GM18951 (cell line): ENCODE measurements at regions of chr21 and their contacts with region 1.

Region 1: DNA sequence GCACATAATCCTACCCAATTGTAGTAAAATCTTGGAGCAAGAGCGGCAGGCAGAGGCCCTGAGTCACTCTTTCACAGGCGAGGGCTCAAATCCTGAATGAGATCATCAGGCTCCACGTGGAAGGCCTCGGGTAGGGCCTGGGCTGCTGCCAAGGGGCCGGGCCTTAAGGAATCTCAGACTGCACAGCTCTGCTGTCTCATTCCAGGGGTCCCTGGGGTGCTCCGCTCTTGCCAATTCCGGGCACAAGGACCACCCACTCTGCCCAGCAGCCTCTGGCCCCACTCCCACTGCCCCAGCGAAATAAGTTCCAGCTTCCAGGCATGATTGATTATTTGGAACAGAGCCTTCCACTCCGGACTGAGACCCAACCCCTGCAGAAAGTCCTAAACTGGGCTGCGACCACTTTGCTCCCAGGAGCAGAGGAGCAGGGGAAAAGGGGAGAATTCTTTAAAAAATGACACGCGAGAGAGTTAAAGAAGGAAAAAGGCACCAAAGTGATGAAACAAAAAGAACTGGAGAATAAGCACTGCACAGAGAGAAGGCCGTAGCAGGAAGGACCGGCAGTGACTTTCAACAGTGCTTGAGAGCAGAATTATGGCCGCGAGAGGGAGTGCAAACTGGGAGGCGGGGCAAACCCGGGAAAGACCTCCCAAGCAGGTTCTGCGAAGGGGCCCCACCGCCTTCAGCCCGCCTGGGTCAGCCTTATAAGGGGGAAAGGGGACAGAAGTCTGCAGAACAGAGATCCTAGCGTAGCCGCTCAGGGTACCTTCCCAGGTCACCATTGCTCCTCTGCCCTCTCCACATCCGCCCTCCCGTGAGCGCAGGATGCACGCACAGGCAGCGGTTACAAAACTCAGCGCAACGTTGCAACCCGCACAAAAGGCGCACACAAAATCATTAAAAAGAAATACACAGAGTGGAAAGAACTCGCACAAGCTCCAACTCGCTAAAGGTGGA is 2.0 kb downstream of the ADAMTS1 start:
- POLR2A ChIP-seq: no peak

Region 2: DNA sequence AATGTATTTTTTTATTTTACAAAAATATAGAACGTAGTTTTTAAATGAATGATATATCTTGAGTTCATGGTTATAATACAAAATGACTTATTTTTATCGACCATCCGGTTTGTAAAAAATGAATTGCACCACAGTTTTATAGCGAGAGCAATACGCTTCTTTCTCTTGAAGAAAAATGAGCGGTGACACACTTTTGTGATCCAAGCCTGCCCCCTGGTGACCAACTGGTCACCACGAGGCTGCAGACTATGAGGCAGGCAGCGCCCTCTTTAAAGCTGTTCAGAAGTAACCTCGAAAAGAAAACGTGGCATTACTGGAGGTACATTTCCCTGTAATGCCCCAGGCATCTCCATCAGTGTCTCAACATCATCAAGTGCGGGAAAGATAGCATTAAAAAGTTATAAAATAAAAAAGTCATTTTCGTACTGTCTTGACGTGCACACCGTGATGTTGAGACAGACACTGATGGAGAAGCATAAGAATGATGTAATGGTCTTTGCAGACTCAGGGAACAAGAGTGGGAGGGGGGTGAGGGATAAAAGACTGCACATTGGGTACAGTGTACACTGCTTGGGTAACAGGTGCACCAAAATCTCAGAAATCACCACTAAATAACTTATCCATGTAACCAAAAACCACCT is 857.8 kb after region 1 on chr21:
- in situ Hi-C with region 1: loop called (anchors 25 kb)
- POLR2A ChIP-seq: no peak

Region 3: DNA sequence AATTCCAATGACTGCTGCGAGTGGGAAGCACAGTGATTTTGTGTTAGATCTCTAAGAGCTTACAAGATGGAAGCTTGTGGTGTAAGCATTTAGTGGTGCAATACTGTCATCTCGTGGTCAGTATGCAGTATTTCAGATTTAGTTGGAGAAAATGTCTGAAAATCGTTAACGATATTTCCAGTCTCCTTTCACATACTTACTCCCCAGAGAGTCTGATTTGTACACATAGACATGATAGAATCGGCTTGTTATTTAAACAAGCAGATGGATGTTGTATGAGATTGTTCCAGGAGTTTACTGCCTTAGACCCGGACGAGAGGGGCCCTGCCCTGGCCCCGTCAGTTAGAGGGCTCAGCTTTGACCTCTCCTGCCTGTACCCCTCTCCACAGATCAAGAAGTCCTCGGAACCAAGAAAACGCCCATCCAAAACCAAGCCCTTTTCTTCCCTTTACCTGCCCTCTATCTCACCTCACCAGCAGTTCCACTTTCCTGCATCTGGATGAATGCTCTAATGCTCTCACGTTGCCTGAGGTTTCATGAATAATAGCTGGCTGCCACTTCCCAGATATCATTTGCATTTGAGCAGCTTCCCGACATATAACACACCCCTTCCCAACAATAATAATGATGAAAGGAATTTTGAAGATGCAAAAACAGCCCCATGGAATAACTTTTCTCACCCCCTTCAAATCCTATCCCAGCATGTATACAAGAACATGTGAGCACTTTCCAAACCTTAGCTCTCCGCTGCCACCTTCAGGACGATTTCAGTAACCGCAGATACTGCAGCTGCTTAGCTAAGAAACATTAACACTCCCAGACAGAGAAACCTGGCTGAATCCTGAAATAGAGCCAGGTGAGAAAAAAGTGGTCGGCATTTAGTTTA is 1902.1 kb after region 1 on chr21:
- in situ Hi-C with region 1: loop called (anchors 25 kb)
- POLR2A ChIP-seq: no peak